ENCODE measurements at regions of chr15 and their contacts with region 1.

Region 1: GRCh38 chr15:80776420-80777045 is 2.6 kb upstream of the CEMIP start:
- DNase-seq: peak; percentile 76
- H3K4me3 ChIP-seq: peak overlapping the region in 1 of 2 experiments; percentile 13; a peak in 1 of 4 replicates
- H3K27ac ChIP-seq: peak overlapping the region in 1 of 2 experiments; percentile 72; a peak in 2 of 4 replicates
- H3K4me1 ChIP-seq: peaks cover 0 to 27% of the 10 kb centered on the region in 2 experiments; a peak in 3 of 4 replicates
- H3K27me3 ChIP-seq: no peaks in the 10 kb centered on the region
- CTCF ChIP-seq: peak; percentile 88
- EP300 ChIP-seq: no peak
- RAD21 ChIP-seq: peak; percentile 90

Region 2: DNA sequence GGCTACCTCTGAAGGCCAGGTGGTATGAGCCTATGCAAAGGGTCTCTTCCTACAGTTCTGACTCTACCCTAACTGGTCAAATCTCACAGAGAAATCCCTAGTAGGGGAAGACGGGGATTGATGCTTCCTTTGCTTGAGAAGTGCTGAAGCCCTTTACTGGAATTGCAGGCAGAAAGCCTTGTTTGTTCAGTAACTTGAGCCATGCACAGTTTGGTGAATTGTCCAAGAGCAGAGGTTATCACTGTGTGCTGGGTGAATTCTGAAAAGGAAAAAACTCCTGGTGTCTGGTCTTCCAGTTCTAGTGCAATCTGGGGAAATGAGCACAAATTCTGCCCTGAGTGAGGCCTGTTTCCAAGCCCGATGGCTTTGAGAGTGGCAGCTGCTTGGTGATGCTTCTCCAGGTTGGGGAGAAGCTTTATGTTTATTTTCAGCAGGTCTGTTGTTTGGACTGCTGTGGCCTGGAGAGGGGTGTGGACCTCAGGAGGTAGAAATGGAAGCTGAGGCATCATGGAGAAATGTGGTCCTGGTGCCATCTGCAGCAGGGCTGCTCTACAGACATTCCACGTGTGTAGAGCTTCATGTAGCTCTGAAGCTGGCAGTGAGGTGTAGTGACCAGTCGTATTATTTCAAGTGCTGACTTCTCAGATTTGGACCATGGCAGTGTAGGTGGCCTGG is 311.4 kb before region 1 on chr15:
- CTCF ChIA-PET with region 1: interaction called, 185 read pairs
- POLR2A ChIA-PET with region 1: no interaction called
- DNase-seq: no peak
- H3K4me3 ChIP-seq: no peak overlapping the region
- H3K27ac ChIP-seq: no peak overlapping the region
- H3K4me1 ChIP-seq: peaks cover 0 to 18% of the 10 kb centered on the region in 2 experiments; a peak in 2 of 4 replicates
- H3K27me3 ChIP-seq: no peaks in the 10 kb centered on the region
- CTCF ChIP-seq: no peak
- EP300 ChIP-seq: no peak
- RAD21 ChIP-seq: no peak

Region 3: DNA sequence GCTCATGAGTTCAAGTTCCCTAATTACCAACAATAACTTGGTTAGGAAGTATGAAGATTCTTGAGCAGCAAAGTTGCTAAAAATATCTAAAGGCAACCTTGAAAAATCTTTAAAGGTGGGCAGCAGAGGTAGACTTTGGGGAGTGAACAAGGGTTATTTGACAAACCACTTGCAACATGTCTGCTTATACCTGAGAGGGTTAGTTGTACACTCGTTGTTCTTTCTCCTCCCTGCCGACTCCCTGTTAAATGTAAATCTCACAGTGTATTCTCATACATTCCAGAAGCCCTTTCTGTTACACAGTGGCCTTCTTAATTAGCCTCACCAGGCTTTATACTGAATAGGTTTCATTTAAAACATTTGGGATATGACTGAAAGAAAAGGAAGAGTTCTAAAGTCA is 250.7 kb before region 1 on chr15:
- CTCF ChIA-PET with region 1: no interaction called
- POLR2A ChIA-PET with region 1: no interaction called
- DNase-seq: no peak
- H3K4me3 ChIP-seq: no peak overlapping the region
- H3K27ac ChIP-seq: no peak overlapping the region
- H3K4me1 ChIP-seq: no peaks in the 10 kb centered on the region
- H3K27me3 ChIP-seq: no peaks in the 10 kb centered on the region
- CTCF ChIP-seq: no peak
- EP300 ChIP-seq: no peak
- RAD21 ChIP-seq: no peak

Region 4: GRCh38 chr15:80580106-80580505 is 196.4 kb before region 1 on chr15:
- CTCF ChIA-PET with region 1: interaction called, 25 read pairs
- POLR2A ChIA-PET with region 1: no interaction called
- DNase-seq: no peak
- H3K4me3 ChIP-seq: no peak overlapping the region
- H3K27ac ChIP-seq: no peak overlapping the region
- H3K4me1 ChIP-seq: no peaks in the 10 kb centered on the region; a peak in 1 of 4 replicates
- H3K27me3 ChIP-seq: no peaks in the 10 kb centered on the region
- CTCF ChIP-seq: no peak
- EP300 ChIP-seq: no peak
- RAD21 ChIP-seq: no peak

Region 5: GRCh38 chr15:80660122-80660521 is 116.4 kb before region 1 on chr15:
- CTCF ChIA-PET with region 1: interaction called, 33 read pairs
- POLR2A ChIA-PET with region 1: no interaction called
- DNase-seq: peak; percentile 42
- H3K4me3 ChIP-seq: no peak overlapping the region; a peak in 1 of 4 replicates
- H3K27ac ChIP-seq: no peak overlapping the region
- H3K4me1 ChIP-seq: no peaks in the 10 kb centered on the region
- H3K27me3 ChIP-seq: no peaks in the 10 kb centered on the region
- CTCF ChIP-seq: peak; percentile 38
- EP300 ChIP-seq: no peak
- RAD21 ChIP-seq: peak; percentile 57

Region 6: GRCh38 chr15:80789296-80789695 is 12.8 kb after region 1 on chr15:
- CTCF ChIA-PET with region 1: interaction called, 17 read pairs
- POLR2A ChIA-PET with region 1: no interaction called
- DNase-seq: no peak
- H3K4me3 ChIP-seq: no peak overlapping the region
- H3K27ac ChIP-seq: no peak overlapping the region
- H3K4me1 ChIP-seq: no peaks in the 10 kb centered on the region; a peak in 1 of 4 replicates
- H3K27me3 ChIP-seq: no peaks in the 10 kb centered on the region
- CTCF ChIP-seq: no peak
- EP300 ChIP-seq: no peak
- RAD21 ChIP-seq: no peak

Region 7: GRCh38 chr15:80902298-80902801 is 125.8 kb after region 1 on chr15:
- CTCF ChIA-PET with region 1: no interaction called
- POLR2A ChIA-PET with region 1: no interaction called
- DNase-seq: no peak
- H3K4me3 ChIP-seq: no peak overlapping the region
- H3K27ac ChIP-seq: no peak overlapping the region
- H3K4me1 ChIP-seq: peaks cover 0 to 2% of the 10 kb centered on the region in 2 experiments; a peak in 1 of 4 replicates
- H3K27me3 ChIP-seq: no peaks in the 10 kb centered on the region
- CTCF ChIP-seq: no peak
- EP300 ChIP-seq: no peak
- RAD21 ChIP-seq: no peak

Region 8: DNA sequence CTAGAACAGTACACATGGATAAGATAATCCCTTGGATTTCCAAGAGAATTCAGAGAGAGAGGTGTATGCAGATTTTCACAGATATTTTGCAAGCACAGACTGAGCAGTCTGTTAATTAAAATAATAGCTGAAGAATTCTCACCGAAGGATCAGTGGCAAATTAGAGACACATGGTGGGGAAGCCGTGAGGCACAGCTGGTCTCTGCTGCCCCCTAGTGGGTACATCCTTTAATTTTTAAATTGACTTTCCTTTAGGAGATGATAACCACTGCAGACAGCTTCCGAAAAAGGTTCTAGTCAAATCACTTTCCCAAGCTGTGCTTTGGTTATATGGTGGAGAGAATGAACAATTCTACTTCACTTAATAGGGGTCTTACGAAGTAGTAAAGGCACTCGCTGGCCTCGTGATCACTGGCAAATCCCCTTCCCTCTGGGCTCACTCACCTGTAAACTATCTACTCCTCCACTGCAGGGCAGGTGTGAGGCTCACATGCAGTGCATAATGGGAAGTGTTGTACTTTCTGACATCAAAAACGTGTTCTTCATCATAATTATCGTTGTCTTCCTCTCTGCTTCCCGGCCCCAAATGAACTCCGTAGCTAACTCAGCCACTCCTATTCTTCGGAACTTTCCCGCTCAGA is 193.6 kb after region 1 on chr15:
- CTCF ChIA-PET with region 1: interaction called, 139 read pairs
- POLR2A ChIA-PET with region 1: no interaction called
- DNase-seq: peak; percentile 70
- H3K4me3 ChIP-seq: no peak overlapping the region; a peak in 1 of 4 replicates
- H3K27ac ChIP-seq: no peak overlapping the region
- H3K4me1 ChIP-seq: peaks cover 0 to 7% of the 10 kb centered on the region in 2 experiments; a peak in 1 of 4 replicates
- H3K27me3 ChIP-seq: no peaks in the 10 kb centered on the region
- CTCF ChIP-seq: peak; percentile 87
- EP300 ChIP-seq: no peak
- RAD21 ChIP-seq: peak; percentile 95